ENCODE measurements at regions of chr1 and their contacts with region 1.

Region 1: DNA sequence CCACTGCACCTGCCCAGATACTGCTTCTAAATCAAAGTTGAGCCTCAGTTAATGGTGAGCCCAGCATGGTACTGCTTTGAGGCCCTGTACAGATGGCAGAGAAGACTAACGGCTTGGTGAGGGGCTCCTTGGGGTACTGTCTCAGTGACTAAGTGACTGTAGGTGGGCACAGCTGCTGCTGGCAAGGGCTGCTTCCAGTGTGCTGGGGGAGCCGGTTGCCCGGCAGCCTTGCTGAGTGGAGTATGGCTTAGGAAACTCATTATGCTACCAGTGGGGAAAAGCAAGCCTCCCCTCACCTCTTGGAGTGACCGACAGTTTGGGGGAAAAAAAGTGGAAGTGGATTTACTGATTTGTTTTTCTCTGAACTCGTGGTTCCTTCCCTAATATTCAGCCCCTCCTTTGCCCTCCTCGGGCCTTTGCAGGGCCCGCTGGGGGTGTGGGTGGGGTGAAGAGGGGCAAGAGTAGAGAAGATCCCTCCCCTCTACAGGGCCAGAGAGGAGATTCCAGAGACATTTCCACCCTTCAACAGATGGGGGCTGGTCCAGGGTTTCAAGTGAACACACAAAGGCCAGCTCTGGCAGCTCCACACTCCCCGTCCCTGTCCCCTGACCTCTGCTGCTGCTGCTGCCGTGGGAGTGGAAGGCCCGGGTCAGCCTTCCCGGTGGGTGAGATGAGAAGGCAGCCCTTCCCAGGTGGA is 23.4 kb upstream of the ARHGEF10L start:
- DNase-seq: no peak
- H3K4me3 ChIP-seq: no peak overlapping the region
- H3K27ac ChIP-seq: no peak overlapping the region
- H3K4me1 ChIP-seq: peaks cover 2% of the 10 kb centered on the region
- H3K27me3 ChIP-seq: no peaks in the 10 kb centered on the region
- CTCF ChIP-seq: no peak
- EP300 ChIP-seq: no peak
- POLR2A ChIP-seq: no peak

Region 2: GRCh38 chr1:17569200-17570161 is 53.4 kb after region 1 on chr1:
- intact Hi-C with region 1: no loop called
- DNase-seq: peak; percentile 84 to 92 (median 90)
- H3K4me3 ChIP-seq: no peak overlapping the region
- H3K27ac ChIP-seq: peak overlapping the region; percentile 95
- H3K4me1 ChIP-seq: peaks cover 41% of the 10 kb centered on the region
- H3K27me3 ChIP-seq: no peaks in the 10 kb centered on the region
- CTCF ChIP-seq: no peak
- EP300 ChIP-seq: peak; percentile 52
- POLR2A ChIP-seq: peak; percentile 18

Region 3: DNA sequence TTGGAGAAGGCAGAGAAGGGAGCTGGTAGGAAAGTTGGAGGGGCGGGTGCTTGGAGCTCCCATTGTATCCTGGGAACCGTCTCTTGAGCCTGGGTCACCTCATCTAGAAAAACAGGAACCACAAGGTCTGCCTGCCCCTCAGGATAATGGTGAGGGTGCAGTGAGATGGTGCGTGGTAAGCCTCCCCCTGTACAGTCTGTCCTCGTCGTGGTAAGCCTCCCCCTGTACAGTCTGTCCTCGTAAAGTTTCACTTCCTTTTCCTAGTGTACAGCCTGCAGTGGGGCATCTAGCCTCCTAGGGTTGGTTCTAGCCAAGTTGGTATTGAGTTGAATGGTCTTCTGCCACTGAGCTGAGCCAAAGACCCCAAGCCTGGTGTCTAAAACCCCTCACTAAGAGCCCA is 525.0 kb after region 1 on chr1:
- intact Hi-C with region 1: no loop called
- DNase-seq: no peak
- H3K4me3 ChIP-seq: no peak overlapping the region
- H3K27ac ChIP-seq: no peak overlapping the region
- H3K4me1 ChIP-seq: no peaks in the 10 kb centered on the region
- H3K27me3 ChIP-seq: no peaks in the 10 kb centered on the region
- CTCF ChIP-seq: no peak
- EP300 ChIP-seq: no peak
- POLR2A ChIP-seq: no peak

Region 4: DNA sequence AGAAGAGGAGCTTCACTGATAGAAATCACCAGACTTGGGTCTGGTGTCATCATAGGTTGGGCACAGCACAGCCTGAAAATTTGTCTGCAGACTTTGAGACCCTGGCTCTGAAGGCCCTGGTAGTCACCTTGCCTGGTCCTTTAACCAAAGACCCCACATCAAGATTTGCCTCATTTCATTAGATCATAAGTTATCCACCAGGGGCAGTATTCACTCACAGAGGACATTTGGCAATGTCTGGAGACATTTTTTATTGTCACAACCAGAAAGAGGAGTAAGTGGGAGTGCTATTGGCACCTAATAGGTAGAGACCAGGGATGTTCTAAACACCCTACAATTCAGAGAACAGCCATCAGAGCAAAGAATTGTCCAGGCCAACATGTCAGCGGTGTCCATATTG is 1092.5 kb after region 1 on chr1:
- intact Hi-C with region 1: no loop called
- DNase-seq: no peak
- H3K4me3 ChIP-seq: no peak overlapping the region
- H3K27ac ChIP-seq: no peak overlapping the region
- H3K4me1 ChIP-seq: no peaks in the 10 kb centered on the region
- H3K27me3 ChIP-seq: no peaks in the 10 kb centered on the region
- CTCF ChIP-seq: no peak
- EP300 ChIP-seq: no peak
- POLR2A ChIP-seq: no peak

Region 5: DNA sequence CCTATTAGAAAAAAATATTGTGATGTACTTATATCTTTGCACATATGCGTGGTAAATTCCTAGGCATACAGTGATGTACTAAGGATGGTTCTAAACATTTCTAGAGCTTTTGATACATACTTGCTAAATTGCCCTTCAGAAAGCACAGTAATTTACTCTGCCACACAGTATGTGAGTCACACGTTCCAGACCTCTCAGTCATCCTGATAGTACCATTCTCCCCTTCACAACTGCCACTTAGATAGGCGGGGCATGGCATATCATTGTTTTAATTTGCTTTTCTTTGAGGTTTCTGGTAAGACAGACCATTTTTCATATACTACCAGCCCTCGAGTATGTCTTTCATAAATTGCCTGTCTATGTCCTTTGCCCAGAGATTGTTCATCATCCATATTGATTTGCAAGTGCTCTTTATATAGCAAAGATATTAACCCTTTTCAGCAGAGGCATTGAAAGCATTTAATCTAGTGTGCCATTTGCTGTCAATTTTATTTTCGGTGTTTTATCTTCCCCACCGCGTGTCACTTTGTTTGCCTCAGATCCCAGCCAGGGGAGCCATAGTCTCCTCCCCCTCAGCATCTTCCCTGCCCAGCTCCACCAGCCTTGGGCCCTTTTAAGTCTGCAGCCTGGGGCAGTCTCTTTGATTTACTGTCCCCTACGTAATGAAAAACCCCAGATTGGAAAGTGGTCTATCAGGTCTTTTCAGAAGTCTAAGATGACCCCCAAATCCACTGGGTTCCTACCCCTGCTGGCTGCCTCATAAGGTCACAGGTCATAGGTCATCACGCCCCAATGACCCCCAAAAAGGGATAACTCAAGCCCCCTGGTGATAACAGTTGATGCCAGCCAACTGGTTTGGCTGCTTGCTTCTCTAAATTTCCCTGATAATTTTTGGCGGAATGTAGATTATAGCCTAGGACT is 1102.7 kb after region 1 on chr1:
- intact Hi-C with region 1: no loop called
- DNase-seq: no peak
- H3K4me3 ChIP-seq: no peak overlapping the region
- H3K27ac ChIP-seq: no peak overlapping the region
- H3K4me1 ChIP-seq: no peaks in the 10 kb centered on the region
- H3K27me3 ChIP-seq: no peaks in the 10 kb centered on the region
- CTCF ChIP-seq: no peak
- EP300 ChIP-seq: no peak
- POLR2A ChIP-seq: no peak

Region 6: DNA sequence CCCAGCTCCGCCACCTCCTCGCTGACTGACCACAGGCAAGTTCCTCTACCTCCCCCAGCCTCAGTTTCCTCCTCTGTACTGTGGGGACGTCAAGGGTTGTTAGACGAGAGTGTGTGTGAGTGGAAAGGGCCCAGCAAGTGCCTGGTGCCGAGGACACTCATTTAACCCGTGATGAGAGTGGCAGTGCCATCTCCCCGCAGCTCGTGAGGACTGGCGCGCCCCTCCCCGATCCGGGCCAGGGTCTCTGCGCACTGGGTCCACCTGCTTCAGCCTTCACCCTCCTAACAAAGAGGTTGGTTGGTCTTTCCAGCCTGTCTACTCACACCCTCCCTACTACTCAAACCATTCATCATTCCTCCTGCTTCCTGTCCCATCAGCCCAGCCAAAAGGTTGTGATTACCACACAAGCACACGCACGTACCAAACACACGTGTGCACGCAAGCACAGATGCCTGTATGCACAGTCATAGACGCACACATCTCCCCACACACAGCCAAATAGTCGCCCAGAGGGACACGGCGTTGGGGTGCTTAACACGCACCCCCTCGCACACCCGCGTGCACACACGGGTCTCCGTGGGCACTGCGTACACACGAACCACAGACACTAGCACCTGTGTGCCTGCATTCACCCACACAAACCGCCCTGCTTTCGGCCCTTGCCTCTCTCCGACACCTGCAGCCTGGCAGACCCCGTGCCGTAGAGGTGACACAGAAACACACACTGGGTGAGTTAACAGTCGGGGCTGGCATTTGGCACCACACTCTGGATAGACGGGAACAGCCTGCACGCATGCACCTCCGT is 1304.1 kb after region 1 on chr1:
- intact Hi-C with region 1: loop called in 1 of 4 experiments (anchors 10 kb)
- DNase-seq: no peak
- H3K4me3 ChIP-seq: no peak overlapping the region
- H3K27ac ChIP-seq: no peak overlapping the region
- H3K4me1 ChIP-seq: no peaks in the 10 kb centered on the region
- H3K27me3 ChIP-seq: no peaks in the 10 kb centered on the region
- CTCF ChIP-seq: no peak
- EP300 ChIP-seq: no peak
- POLR2A ChIP-seq: no peak

Measured in ovary (tissue), 10 donors.